ENCODE measurements at regions of chr11 and their contacts with region 1.

Region 1: DNA sequence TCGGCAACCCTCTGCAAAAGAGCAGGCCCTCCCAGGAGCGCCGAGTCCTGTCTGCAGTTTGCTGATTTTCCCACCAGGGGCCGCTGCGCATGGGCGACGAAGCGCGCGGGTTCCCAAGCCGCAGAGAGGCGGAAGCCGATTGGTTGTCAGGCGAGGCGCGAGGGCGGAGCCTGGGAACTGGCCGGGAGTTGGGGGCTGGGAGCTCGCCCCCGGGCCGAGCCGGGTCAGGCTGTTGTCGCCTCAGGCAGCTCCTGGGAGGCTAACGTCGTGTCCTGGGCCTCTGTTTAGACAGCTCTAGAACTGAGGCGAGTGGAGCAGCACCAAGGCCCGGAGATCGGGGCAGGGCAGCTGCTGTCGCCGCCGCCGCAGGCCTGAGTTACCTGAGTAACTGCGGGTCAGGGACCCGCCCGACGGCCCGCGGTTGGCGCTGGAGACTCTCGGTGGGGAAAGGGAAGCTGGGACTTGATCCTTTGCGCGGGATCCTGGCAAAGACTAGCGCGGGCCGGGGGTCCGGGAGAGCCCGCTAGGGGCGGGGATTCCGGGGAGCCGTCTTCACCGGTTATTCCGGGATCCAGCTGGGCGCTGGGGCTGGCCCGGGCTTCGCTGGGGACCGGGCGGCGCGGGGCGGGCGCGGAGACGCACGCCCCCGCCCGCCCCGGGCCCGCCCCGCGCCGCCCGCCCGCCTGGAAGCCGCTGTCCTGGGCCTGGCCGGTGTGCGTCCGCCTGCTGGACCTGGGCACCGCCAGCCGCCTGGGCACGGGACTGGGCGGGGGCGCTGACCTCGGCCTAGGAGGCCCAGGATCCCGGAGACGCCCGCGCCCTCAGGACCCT is at the start of gene STIM1:
- DNase-seq: peak; percentile 99
- H3K4me3 Mint-ChIP-seq: peak within 1 kb of the TSS; percentile 85
- H3K27ac Mint-ChIP-seq: peak within 1 kb of the TSS; percentile 99
- H3K4me1 Mint-ChIP-seq: peaks cover 53% of the 10 kb centered on the region
- H3K27me3 Mint-ChIP-seq: no peaks in the 10 kb centered on the region
- total RNA-seq, gene STIM1: 55.9 to 61.1 TPM

Region 2: DNA sequence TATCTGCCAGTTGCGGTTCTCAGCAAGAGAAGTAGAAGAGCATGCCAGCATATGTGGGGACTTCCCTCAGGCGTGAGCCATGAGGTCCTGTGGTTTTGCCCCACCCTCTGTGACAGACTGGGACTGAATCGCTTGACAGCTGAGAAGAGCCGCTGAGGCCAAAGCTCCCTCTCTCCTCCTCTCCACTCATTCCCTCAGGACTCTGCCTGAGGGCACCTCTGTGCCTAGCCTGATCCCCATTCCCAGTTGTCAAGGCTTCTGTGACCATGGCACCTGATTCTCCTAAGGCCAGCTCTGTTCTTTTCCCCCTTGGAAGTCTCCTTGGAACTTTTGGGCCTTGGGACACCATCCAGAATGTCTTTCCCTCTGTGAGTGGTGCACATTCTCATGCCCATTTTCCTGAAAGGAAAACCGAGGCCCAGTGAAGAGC is 240.4 kb before region 1 on chr11:
- CTCF ChIA-PET with region 1: no interaction called
- POLR2A ChIA-PET with region 1: no interaction called
- intact Hi-C with region 1: no loop called
- DNase-seq: peak; percentile 78
- H3K4me3 Mint-ChIP-seq: no peak overlapping the region
- H3K27ac Mint-ChIP-seq: no peak overlapping the region
- H3K4me1 Mint-ChIP-seq: peaks cover 13% of the 10 kb centered on the region
- H3K27me3 Mint-ChIP-seq: no peaks in the 10 kb centered on the region

Region 3: DNA sequence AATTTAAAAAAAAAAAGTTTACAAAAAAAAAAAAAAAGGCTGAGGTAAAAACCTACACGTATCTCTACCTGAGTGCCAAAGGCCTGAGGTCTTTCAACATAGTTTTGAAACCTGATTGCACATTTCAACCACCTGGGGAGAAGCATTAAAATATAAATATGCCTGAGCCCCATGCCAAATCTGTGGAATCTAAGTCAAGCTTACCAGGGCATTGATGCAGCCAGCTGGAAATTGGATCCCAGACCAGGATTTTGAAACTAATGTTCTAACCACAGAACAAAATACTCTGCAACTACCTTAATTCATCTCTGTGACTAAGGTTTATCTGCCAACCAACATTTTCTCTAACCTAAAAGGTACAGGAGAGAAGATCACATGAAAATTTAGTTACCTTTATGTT is 145.2 kb before region 1 on chr11:
- CTCF ChIA-PET with region 1: no interaction called
- POLR2A ChIA-PET with region 1: no interaction called
- intact Hi-C with region 1: no loop called
- DNase-seq: no peak
- H3K4me3 Mint-ChIP-seq: no peak overlapping the region
- H3K27ac Mint-ChIP-seq: no peak overlapping the region
- H3K4me1 Mint-ChIP-seq: no peaks in the 10 kb centered on the region
- H3K27me3 Mint-ChIP-seq: no peaks in the 10 kb centered on the region

Region 4: DNA sequence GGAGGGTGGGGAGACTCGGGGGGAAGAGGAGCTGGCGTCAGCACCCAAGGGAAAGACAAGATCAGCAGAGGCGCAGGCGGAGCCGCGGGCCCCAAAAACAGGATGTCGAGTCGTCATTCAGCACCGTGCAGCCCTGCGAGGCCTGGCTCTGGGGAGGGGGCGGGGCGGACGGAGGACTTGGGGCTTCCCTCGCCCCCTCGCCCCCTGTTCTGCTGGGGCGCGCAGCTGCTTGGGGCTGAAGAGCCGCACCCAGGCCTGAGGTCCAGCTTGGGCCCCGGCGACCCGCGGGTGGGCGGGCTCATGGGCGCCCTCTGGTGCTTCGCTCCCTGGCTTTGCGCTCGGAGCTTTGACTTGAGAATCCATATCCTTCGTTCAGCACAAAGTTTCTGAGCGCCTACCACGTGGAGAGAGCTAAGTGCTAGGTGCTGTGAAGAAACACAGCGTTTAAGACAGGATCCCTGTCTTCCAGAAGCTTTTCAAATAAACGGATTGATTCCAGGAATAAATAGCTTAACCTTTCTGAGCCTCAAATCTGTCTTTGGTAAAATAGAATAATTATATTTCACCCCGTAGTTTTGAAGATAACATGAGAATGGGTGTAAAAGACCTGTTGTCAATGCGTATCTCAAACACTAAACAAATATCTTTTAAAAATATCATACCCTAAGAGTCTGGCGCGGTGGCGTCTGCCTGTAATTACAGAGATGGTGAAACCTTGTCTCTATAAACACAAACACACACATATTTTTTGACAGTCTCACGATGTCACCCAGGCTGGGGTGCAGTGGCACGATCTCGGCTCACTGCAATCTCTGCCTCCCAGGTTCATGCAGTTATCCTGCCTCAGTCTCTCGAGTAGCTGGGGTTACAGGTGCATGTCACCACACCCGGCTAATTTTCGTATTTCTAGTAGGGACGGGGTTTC is 13.5 kb before region 1 on chr11:
- CTCF ChIA-PET with region 1: interaction called, 245 read pairs
- POLR2A ChIA-PET with region 1: interaction called, 124 read pairs
- intact Hi-C with region 1: loop called (anchors 1 kb)
- DNase-seq: peak; percentile 97
- H3K4me3 Mint-ChIP-seq: peak overlapping the region; percentile 76
- H3K27ac Mint-ChIP-seq: peak overlapping the region; percentile 93
- H3K4me1 Mint-ChIP-seq: peaks cover 42% of the 10 kb centered on the region
- H3K27me3 Mint-ChIP-seq: no peaks in the 10 kb centered on the region

Region 5: DNA sequence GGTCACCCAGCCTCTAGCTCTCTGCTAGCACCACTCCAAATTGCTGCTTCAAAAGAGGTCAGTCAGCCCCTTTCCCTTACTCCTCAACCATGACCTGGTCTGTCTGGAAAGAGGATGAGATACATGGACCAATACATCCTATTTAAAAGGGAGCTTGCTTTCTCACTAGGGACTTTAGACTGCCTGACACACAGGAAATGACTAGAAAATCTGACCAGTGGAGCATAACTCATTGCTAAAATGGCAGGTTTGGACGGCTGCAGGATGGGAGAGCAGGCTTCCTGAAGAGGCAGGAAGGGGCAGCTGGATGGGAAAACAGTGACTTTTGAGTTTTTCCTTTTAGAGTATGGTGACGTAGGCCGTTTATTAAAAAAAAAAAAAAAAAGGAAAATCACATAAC is 25.5 kb after region 1 on chr11:
- CTCF ChIA-PET with region 1: interaction called, 41 read pairs
- POLR2A ChIA-PET with region 1: interaction called, 15 read pairs
- intact Hi-C with region 1: loop called (anchors 1 kb)
- DNase-seq: no peak
- H3K4me3 Mint-ChIP-seq: no peak overlapping the region
- H3K27ac Mint-ChIP-seq: peak overlapping the region; percentile 7
- H3K4me1 Mint-ChIP-seq: peaks cover 73% of the 10 kb centered on the region
- H3K27me3 Mint-ChIP-seq: no peaks in the 10 kb centered on the region

Region 6: DNA sequence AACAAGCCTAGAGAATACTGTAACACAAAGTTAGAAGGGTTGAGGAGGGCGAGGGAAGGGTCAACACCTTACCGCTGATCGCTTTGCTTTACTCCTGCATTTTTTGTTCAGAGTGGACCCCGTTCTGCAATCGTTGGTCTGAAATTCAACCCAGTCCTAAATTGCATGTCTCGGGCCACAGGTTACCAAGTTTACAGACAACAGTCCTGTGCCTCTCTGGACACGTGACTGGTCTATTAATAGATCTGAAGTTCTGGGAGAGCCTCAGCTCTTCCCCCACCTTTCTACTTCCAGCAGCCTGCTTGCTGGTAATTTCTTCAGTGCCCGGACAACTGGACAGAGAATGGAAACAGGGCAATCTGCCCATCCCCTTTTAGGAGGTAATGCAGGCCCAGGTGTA is 74.5 kb after region 1 on chr11:
- CTCF ChIA-PET with region 1: interaction called, 19 read pairs
- POLR2A ChIA-PET with region 1: no interaction called
- intact Hi-C with region 1: no loop called
- DNase-seq: no peak
- H3K4me3 Mint-ChIP-seq: no peak overlapping the region
- H3K27ac Mint-ChIP-seq: no peak overlapping the region
- H3K4me1 Mint-ChIP-seq: peaks cover 29% of the 10 kb centered on the region
- H3K27me3 Mint-ChIP-seq: no peaks in the 10 kb centered on the region

Region 7: GRCh38 chr11:3971756-3972404 is 116.7 kb after region 1 on chr11:
- CTCF ChIA-PET with region 1: interaction called, 22 read pairs
- POLR2A ChIA-PET with region 1: interaction called, 15 read pairs
- intact Hi-C with region 1: loop called (anchors 1 kb)
- DNase-seq: no peak
- H3K4me3 Mint-ChIP-seq: no peak overlapping the region
- H3K27ac Mint-ChIP-seq: peak overlapping the region; percentile 44
- H3K4me1 Mint-ChIP-seq: peaks cover 61% of the 10 kb centered on the region
- H3K27me3 Mint-ChIP-seq: no peaks in the 10 kb centered on the region

Region 8: DNA sequence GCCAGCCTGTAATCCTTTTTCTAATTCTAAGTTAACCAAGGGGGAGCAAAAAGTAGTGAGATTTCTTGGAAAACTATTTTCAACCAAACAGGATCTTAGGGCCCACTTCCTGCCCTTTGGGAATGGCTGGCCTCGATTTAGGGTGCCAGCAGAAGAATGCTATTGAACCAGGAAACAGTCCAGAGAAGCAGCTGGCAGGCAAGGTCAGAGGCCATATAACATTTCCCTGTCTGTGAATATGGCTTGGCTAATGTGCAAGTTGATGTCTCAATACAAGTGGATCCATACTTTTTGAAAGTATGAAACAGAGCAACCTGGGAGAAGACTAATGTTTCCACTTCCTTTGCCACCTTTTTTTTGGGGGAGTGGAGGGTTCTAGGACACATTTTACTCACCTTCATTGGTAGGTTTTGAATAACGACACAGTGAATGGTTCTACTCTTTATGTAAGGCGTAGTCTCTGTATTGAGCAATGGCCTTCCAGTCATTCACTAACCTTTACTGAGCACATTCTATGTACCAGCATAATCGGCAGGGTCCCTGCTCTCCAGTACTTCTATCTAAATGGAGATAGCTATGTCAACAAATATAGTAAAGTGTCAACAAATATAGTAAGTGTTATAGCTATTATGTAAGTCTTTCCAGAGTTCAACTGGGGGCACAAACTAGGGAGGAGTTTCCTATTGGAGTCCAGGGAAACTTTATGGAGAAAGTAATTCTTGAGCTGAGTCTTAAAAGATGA is 205.2 kb after region 1 on chr11:
- CTCF ChIA-PET with region 1: interaction called, 756 read pairs
- POLR2A ChIA-PET with region 1: interaction called, 14 read pairs
- intact Hi-C with region 1: loop called (anchors 1 kb)
- DNase-seq: no peak
- H3K4me3 Mint-ChIP-seq: no peak overlapping the region
- H3K27ac Mint-ChIP-seq: no peak overlapping the region
- H3K4me1 Mint-ChIP-seq: peaks cover 44% of the 10 kb centered on the region
- H3K27me3 Mint-ChIP-seq: no peaks in the 10 kb centered on the region

Measured in activated CD4-positive, alpha-beta memory T cell treated with anti-CD3 and anti-CD28 coated beads for 36 hours (primary cell).